Gastrocnemius medialis (tissue), 4 donors: ENCODE measurements at regions of chrX and their contacts with region 1.

Region 1: GRCh38 chrX:50838820-50839600 is 25.0 kb upstream of the SHROOM4 start:
- DNase-seq: no peak
- ATAC-seq: no peak
- H3K4me3 ChIP-seq: no peak overlapping the region
- H3K27ac ChIP-seq: no peak overlapping the region
- H3K4me1 ChIP-seq: no peaks in the 10 kb centered on the region
- H3K27me3 ChIP-seq: no peaks in the 10 kb centered on the region
- CTCF ChIP-seq: no peak
- POLR2A ChIP-seq: no peak

Region 2: DNA sequence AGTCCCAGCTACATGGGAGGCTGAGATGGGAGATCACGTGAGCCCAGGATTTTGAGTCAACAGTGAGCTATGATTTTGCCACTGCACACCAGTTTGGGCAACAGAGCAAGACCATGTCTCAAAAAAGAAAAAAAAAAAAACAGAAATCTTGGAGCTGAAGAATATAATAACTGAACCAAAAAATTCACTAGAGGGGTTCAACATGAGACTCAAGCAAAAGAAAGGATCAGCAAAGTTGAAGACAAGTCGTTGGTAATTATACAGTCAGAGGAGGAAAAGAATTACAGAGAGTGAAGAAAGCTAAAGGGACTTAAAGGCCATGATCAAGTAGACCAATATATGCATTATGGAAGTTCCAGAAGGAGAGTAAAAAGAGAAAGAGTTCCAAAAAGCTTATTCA is 51.9 kb before region 1 on chrX:
- in situ Hi-C with region 1: no loop called
- intact Hi-C with region 1: no loop called
- DNase-seq: no peak
- ATAC-seq: no peak
- H3K4me3 ChIP-seq: no peak overlapping the region
- H3K27ac ChIP-seq: no peak overlapping the region
- H3K4me1 ChIP-seq: no peaks in the 10 kb centered on the region
- H3K27me3 ChIP-seq: no peaks in the 10 kb centered on the region
- CTCF ChIP-seq: no peak
- POLR2A ChIP-seq: no peak

Region 3: DNA sequence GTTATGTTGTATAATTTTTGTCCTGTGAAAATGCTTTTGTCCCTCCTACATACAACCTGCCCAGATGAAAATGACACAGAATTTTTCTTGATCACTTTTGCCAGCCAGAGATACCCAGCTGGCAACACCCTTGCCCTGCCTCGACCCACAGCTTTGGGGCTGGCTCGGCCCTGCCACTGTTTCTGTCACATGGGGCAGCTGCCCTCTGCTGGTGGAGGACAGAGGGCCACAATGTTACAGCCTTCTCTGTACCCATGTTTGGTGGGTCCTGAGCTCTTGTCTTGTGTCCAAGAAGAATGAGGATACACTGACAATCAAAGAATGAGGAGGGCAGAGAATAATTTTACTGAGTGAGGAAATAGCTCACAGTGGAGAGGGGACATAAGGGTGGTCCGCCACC is 102.6 kb after region 1 on chrX:
- in situ Hi-C with region 1: loop called in 1 of 4 experiments (anchors 25 kb)
- intact Hi-C with region 1: no loop called
- DNase-seq: no peak
- ATAC-seq: no peak
- H3K4me3 ChIP-seq: no peak overlapping the region
- H3K27ac ChIP-seq: no peak overlapping the region
- H3K4me1 ChIP-seq: no peaks in the 10 kb centered on the region
- H3K27me3 ChIP-seq: peaks cover 0 to 4% (median 0%) of the 10 kb centered on the region in 3 donors
- CTCF ChIP-seq: no peak
- POLR2A ChIP-seq: no peak